CD4-positive, alpha-beta memory T cell (primary cell): ENCODE measurements at regions of chr19 and their contacts with region 1.

Region 1: DNA sequence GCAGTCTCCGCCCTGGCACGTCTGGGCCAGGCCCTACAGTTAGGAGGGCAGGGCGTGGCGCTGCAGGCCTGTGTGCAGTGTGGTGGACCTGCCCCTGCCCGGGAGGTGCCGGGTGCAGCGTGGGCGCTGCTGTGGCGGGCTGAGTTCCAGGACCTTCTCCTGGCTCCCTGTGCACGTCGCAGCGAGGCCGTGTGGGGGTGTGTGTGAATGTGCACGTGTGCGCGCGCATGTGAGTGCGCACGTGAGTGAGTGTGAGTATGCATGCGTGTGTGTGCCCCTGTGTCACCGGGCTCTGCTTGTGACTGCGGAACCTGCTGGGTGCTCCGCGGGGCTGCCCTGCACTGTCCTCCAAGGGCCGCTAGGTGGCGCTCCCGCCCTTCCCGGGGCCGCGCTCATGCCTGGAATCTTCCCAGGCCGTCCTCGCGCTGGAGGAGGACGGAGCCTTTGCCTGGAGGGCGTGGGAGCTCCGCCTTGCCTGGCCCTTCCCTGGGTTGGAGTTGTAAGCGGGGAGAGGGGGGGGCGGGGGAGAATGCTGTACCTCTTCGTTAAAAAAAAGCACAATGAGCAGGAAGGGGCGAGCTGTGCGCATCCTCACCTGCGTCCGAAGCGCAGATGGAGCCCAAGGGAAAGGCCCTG is 79.3 kb downstream of the KDM4B start:
- DNase-seq: peak; percentile 33 to 48 (median 41)
- H3K4me3 ChIP-seq: no peak overlapping the region
- H3K4me3 Mint-ChIP-seq: no peak overlapping the region
- H3K27ac ChIP-seq: no peak overlapping the region
- H3K27ac Mint-ChIP-seq: no peak overlapping the region
- H3K4me1 ChIP-seq: peaks cover 4% of the 10 kb centered on the region
- H3K4me1 Mint-ChIP-seq: peaks cover 0 to 5% (median 3%) of the 10 kb centered on the region in 4 donors
- H3K27me3 ChIP-seq: no peaks in the 10 kb centered on the region
- H3K27me3 Mint-ChIP-seq: no peaks in the 10 kb centered on the region

Region 2: GRCh38 chr19:4867534-4868285 is 180.5 kb before region 1 on chr19 and contains the start of gene PLIN3:
- CTCF ChIA-PET with region 1: no interaction called
- POLR2A ChIA-PET with region 1: no interaction called
- intact Hi-C with region 1: no loop called
- DNase-seq: peak; percentile 78 to 89 (median 79)
- H3K4me3 ChIP-seq: peak within 1 kb of the TSS; percentile 60 to 76
- H3K4me3 Mint-ChIP-seq: peak within 1 kb of the TSS; percentile 85 to 92 (median 86)
- H3K27ac ChIP-seq: peak within 1 kb of the TSS; percentile 74
- H3K27ac Mint-ChIP-seq: peak within 1 kb of the TSS; percentile 79 to 91 (median 87)
- H3K4me1 ChIP-seq: peaks cover 10% of the 10 kb centered on the region
- H3K4me1 Mint-ChIP-seq: peaks cover 10 to 21% (median 14%) of the 10 kb centered on the region in 4 donors
- H3K27me3 ChIP-seq: no peaks in the 10 kb centered on the region
- H3K27me3 Mint-ChIP-seq: peaks cover 2 to 3% of the 10 kb centered on the region in 2 donors
- total RNA-seq, gene PLIN3: 16.0 to 18.2 TPM

Region 3: GRCh38 chr19:5480427-5480836 is 432.2 kb after region 1 on chr19:
- CTCF ChIA-PET with region 1: interaction called, 3 read pairs
- POLR2A ChIA-PET with region 1: no interaction called
- intact Hi-C with region 1: loop called (anchors 5 kb)
- DNase-seq: peak in 3 of 5 donors; percentile 3 to 6 (median 4)
- H3K4me3 ChIP-seq: no peak overlapping the region
- H3K4me3 Mint-ChIP-seq: no peak overlapping the region
- H3K27ac ChIP-seq: no peak overlapping the region
- H3K27ac Mint-ChIP-seq: no peak overlapping the region
- H3K4me1 ChIP-seq: no peaks in the 10 kb centered on the region
- H3K4me1 Mint-ChIP-seq: no peaks in the 10 kb centered on the region
- H3K27me3 ChIP-seq: no peaks in the 10 kb centered on the region
- H3K27me3 Mint-ChIP-seq: peaks cover 10 to 37% of the 10 kb centered on the region in 2 donors

Region 4: DNA sequence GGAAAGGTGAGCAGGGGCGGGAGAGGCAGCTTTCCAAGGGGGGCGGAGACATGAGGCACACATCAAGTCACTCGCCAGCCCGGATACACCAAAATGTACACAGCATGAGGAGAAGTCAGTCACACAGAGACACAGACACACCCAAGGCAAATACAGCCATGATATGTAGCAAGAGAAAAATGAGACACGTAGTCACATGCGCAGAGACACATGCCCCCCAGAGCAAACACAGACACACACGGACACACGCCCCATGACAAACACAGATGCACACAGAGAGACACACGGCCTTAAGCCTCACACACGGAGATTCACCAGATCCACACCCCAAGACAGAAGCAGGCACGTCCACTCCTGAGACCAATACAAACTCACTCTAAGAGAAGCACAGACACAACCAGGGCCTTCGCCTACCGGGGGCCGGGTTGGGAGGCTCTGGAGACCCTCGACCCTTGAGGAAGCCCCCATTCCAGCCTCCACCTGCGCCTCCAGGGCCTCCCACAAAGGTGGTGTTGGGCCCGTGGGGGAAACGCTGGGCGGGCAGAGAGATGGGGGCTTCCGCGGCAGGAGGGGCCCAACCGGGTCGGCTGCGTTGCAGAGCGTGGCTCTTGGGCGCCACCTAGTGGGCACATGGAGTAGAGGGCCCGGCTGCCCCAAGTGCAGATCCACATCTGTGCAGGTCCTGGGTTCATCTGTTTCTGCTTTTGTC is 529.7 kb after region 1 on chr19:
- CTCF ChIA-PET with region 1: no interaction called
- POLR2A ChIA-PET with region 1: no interaction called
- intact Hi-C with region 1: loop called (anchors 5 kb)
- DNase-seq: peak; percentile 50 to 63 (median 56)
- H3K4me3 ChIP-seq: no peak overlapping the region
- H3K4me3 Mint-ChIP-seq: peak overlapping the region in 2 of 8 donors; percentile 49 to 61
- H3K27ac ChIP-seq: no peak overlapping the region
- H3K27ac Mint-ChIP-seq: peak overlapping the region in 4 of 7 donors; percentile 22 to 86 (median 50)
- H3K4me1 ChIP-seq: peaks cover 5% of the 10 kb centered on the region
- H3K4me1 Mint-ChIP-seq: peaks cover 4 to 10% (median 8%) of the 10 kb centered on the region in 4 donors
- H3K27me3 ChIP-seq: no peaks in the 10 kb centered on the region
- H3K27me3 Mint-ChIP-seq: no peaks in the 10 kb centered on the region